ENCODE measurements at regions of chr4 and their contacts with region 1.

Region 1: DNA sequence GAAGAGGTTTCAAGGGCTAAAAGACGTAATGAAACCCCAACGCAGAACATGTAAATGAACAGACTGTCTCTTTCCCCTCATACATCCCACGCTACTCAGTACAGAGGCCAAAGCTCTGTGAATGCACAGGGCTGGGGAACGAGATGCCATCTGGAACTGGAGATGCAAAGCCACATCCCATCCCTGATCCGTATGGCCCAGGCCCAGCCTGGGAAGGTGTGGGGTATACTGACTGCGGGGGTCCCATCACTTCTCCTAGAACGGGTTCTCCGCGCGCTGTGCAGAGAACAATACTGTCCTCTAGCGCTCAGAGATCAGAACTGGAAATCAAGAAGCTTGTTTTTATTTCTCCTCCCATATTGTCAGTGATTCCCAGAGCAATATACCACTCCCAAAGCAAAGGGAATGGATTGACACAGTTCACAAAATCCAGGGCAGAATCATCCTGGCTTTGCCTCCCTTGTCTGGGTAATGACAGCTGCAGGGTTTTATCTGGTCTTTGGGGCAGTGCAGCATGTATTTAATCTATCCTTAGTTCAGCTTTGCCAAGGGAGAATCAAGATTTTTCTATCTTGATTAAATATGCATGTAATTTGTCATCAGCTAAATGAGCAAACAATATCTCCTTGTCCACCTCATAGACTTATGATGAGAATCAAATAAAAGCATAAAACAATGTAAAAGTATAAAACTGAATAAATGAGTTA is 47.3 kb upstream of the TLR3 start:
- DNase-seq: no peak
- H3K4me3 ChIP-seq: no peak overlapping the region
- H3K27ac ChIP-seq: peak overlapping the region in 1 of 4 donors; percentile 4
- H3K4me1 ChIP-seq: peaks cover 0 to 7% (median 0%) of the 10 kb centered on the region in 4 donors
- H3K27me3 ChIP-seq: no peaks in the 10 kb centered on the region
- CTCF ChIP-seq: peak; percentile 62 to 76 (median 66)
- EP300 ChIP-seq: no peak
- POLR2A ChIP-seq: no peak

Region 2: DNA sequence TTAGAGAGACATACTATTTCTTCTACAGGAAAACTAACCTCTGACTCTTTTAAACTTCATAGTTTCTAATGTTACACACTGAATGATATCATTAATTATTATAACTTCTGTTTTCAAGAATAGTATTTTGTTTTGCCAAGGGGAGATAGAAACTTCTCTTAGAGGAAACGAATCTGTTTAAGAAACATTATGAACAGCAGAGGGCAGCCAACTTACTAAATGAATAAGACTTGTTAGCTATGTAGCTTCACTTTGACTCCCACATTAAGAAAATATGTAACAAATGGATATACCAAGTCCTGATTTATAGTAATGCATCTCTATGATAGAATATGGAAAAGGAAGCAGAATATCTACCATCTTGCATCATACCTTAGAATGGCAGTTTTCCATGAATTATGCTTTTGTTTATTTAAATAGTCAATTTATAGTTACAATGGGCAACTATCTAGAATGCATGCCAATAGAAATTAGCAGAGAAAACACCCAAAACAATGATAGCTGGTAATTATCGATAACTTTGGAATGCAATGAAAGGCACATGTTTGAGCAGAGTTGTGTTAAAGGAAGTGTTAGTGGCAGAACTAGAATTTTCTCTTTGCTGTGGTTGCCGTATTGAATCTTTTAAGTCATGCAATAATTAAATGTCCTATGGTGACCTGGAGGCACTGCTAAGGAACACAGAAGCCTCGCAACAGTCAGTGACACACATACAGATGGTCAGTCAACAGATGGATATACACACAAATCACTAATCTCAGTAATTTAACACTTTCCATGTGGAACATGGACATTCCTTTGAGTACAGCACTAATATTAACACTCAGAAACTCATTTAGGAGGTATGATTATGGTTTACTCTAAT is 380.6 kb before region 1 on chr4:
- in situ Hi-C with region 1: loop called (anchors 5 to 25 kb)
- intact Hi-C with region 1: loop called (anchors 5 kb)
- DNase-seq: no peak
- H3K4me3 ChIP-seq: no peak overlapping the region
- H3K27ac ChIP-seq: peak overlapping the region; percentile 3 to 52 (median 18)
- H3K4me1 ChIP-seq: peaks cover 0 to 8% (median 0%) of the 10 kb centered on the region in 4 donors
- H3K27me3 ChIP-seq: no peaks in the 10 kb centered on the region
- CTCF ChIP-seq: peak; percentile 31 to 53 (median 40)
- EP300 ChIP-seq: no peak
- POLR2A ChIP-seq: no peak

Region 3: DNA sequence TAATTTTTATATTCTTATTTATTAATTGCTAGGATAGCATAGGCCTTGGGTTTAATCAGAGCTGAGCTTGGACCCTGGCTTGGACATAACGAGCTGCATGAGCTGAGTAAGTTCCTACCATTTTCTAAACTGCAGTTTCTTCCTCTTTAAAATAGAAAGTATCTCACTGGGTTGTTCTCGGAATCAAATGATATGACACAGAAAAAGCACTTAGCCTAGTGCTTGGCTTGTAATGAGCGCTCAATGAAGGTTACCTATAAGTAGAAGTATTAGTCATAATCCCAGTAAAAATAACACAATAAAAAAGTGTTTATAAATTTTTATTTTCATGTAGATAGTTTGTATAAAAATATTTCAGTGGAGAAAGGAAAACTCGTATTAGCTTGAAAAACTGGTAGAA is 373.0 kb before region 1 on chr4:
- in situ Hi-C with region 1: loop called (anchors 5 to 25 kb)
- intact Hi-C with region 1: loop called (anchors 5 kb)
- DNase-seq: no peak
- H3K4me3 ChIP-seq: no peak overlapping the region
- H3K27ac ChIP-seq: no peak overlapping the region
- H3K4me1 ChIP-seq: peaks cover 3 to 22% (median 18%) of the 10 kb centered on the region in 4 donors
- H3K27me3 ChIP-seq: no peaks in the 10 kb centered on the region
- CTCF ChIP-seq: no peak
- EP300 ChIP-seq: no peak
- POLR2A ChIP-seq: no peak

Region 4: DNA sequence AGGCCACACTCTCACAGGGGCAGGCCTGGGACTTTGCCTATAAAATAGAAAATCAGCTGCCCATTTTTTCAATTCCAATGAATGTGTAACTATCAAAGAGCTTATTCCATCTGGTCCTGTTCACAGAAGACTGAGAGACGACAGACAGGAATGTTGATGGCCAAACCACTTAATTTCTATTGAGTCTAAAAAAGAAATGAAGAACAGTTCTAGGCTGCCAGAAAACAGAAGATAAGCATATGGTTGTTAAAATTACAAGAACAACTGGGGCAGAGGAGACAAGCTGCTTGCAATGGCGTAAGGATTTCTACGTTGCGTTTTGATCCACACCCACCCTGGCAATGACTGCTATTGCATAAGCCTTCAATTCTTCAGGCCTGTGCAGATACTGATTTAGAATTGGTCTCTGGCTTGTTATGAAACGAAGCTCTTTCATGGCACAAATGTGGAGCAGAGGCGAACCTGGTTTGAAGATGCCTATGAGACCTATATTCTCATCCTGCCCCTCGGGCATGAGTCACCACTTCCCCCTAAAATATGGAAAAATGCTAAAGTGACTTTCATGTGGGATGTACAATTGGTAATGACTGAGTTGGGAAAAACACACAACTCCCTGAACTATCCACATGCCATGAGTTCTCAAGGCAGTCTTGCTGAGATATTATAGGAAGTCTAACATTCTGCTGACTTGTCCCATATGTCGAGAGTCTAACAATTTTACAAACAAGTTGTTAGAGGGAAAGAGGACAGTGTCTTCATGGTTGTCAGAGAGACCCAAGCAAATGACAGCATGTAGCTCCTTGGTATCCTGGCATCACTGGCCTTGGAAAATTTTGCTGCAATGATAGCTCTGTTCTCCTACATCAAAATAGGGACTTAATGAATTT is 171.7 kb before region 1 on chr4:
- in situ Hi-C with region 1: no loop called
- intact Hi-C with region 1: loop called (anchors 10 kb)
- DNase-seq: no peak
- H3K4me3 ChIP-seq: no peak overlapping the region
- H3K27ac ChIP-seq: no peak overlapping the region
- H3K4me1 ChIP-seq: no peaks in the 10 kb centered on the region
- H3K27me3 ChIP-seq: no peaks in the 10 kb centered on the region
- CTCF ChIP-seq: no peak
- EP300 ChIP-seq: no peak
- POLR2A ChIP-seq: no peak

Measured in transverse colon (tissue), 4 donors.